Panc1 (cell line): ENCODE measurements at regions of chr3 and their contacts with region 1.

Region 1: DNA sequence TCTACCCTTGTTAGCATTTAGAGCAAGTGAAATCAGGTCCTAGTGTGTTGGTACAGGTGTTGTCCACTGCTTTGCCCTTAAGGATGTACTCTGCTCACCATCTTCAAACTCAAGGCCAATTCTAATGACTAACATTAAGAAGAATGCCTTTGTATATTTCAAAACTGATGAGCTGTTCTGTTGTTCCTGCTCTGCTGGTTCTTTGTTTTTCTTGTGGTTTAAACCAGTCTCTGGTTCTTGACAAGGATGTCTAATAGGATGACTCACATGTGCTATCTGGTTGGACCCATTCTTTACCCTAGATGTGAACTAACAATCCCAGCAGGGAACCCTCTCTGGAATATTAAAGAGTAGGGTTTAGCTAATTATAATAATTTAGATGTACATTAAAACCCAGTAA is 17.3 kb downstream of the ABHD5 start:
- DNase-seq: peak; percentile 15
- ATAC-seq: peak; percentile 71
- H3K4me3 ChIP-seq: no peak overlapping the region
- H3K27ac ChIP-seq: no peak overlapping the region
- H3K4me1 ChIP-seq: no peaks in the 10 kb centered on the region
- H3K27me3 ChIP-seq: no peaks in the 10 kb centered on the region
- CTCF ChIP-seq: no peak

Region 2: GRCh38 chr3:43531835-43532234 is 176.2 kb before region 1 on chr3:
- CTCF ChIA-PET with region 1: no interaction called
- POLR2A ChIA-PET with region 1: interaction called, 13 read pairs
- in situ Hi-C with region 1: no loop called
- intact Hi-C with region 1: no loop called
- DNase-seq: peak; percentile 22
- ATAC-seq: no peak
- H3K4me3 ChIP-seq: no peak overlapping the region
- H3K27ac ChIP-seq: no peak overlapping the region
- H3K4me1 ChIP-seq: no peaks in the 10 kb centered on the region
- H3K27me3 ChIP-seq: no peaks in the 10 kb centered on the region
- CTCF ChIP-seq: no peak

Region 3: GRCh38 chr3:43584043-43584826 is 123.8 kb before region 1 on chr3:
- CTCF ChIA-PET with region 1: no interaction called
- POLR2A ChIA-PET with region 1: no interaction called
- in situ Hi-C with region 1: no loop called
- intact Hi-C with region 1: no loop called
- DNase-seq: no peak
- ATAC-seq: no peak
- H3K4me3 ChIP-seq: no peak overlapping the region
- H3K27ac ChIP-seq: no peak overlapping the region
- H3K4me1 ChIP-seq: no peaks in the 10 kb centered on the region
- H3K27me3 ChIP-seq: no peaks in the 10 kb centered on the region
- CTCF ChIP-seq: no peak